Aorta (tissue), 5 donors: ENCODE measurements at regions of chr17 and their contacts with region 1.

Region 1: DNA sequence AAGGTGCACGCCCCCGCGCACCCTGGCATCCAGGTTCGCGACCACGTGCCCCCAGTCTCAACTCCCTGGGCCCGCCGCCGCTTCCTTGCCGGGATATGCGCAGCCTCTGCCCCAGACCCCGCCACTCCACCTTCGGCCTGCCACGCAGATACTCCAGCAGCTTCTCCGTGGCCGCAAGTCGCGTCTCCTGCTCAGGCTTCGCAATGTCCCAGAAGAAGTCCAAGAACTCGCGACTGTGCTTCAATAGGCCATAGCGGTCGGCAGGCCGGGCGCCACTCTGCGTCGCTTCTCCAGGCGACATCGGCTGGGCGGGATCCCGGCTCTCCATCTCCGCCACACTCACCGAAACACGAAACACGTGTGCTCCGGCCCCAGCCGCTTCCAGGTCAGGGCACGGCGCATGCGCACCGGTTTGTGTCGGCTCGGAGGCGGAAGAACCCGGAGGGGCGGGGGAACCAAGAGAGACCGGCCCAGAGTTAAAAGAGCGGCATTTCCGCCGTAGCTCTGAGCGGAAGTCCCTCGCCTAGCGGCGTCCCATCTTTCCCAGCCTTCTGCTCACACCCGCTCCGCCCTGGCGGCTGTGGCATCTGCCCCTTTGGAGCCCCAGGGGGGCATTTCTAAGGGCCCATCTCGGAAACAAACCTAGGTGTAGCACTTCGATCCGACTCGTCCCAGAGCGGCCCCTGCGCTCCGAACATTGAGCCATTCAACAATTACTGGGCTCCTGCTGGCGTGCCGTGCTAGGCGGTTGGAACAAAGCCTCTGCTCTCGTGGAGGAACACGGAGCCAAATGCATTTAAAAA is at the start of gene MYBBP1A:
- DNase-seq: peak; percentile 99 to 100
- ATAC-seq: peak; percentile 93
- H3K4me3 ChIP-seq: peak within 1 kb of the TSS; percentile 48 to 51
- H3K27ac ChIP-seq: peak within 1 kb of the TSS in 1 of 2 donors; percentile 52
- H3K4me1 ChIP-seq: no peaks in the 10 kb centered on the region
- H3K27me3 ChIP-seq: no peaks in the 10 kb centered on the region
- total RNA-seq, gene MYBBP1A: 35.2 to 36.6 TPM

Region 2: GRCh38 chr17:4498461-4499397 is 56.5 kb before region 1 on chr17 and contains the start of gene SPNS2:
- intact Hi-C with region 1: loop called in 1 of 2 experiments (anchors 5 kb)
- DNase-seq: peak; percentile 72 to 91
- ATAC-seq: peak; percentile 79
- H3K4me3 ChIP-seq: peak within 1 kb of the TSS; percentile 12 to 31
- H3K27ac ChIP-seq: peak within 1 kb of the TSS; percentile 18 to 58
- H3K4me1 ChIP-seq: no peaks in the 10 kb centered on the region
- H3K27me3 ChIP-seq: no peaks in the 10 kb centered on the region
- total RNA-seq, gene SPNS2: 31.3 to 56.2 TPM